Caco-2 (cell line): ENCODE measurements at regions of chr14 and their contacts with region 1.

Region 1: GRCh38 chr14:52729925-52730667 is at the start of gene STYX:
- DNase-seq: peak; percentile 99
- H3K4me3 ChIP-seq: peak within 1 kb of the TSS; percentile 68
- H3K4me3 Mint-ChIP-seq: peak within 1 kb of the TSS; percentile 94
- H3K27ac Mint-ChIP-seq: peak within 1 kb of the TSS; percentile 96
- H3K4me1 ChIP-seq: no peaks in the 10 kb centered on the region
- H3K4me1 Mint-ChIP-seq: peaks cover 6% of the 10 kb centered on the region
- H3K27me3 ChIP-seq: no peaks in the 10 kb centered on the region
- H3K27me3 Mint-ChIP-seq: no peaks in the 10 kb centered on the region
- CTCF ChIP-seq: no peak
- total RNA-seq, gene STYX: 23.1 and 24.4 TPM in 2 replicates

Region 2: DNA sequence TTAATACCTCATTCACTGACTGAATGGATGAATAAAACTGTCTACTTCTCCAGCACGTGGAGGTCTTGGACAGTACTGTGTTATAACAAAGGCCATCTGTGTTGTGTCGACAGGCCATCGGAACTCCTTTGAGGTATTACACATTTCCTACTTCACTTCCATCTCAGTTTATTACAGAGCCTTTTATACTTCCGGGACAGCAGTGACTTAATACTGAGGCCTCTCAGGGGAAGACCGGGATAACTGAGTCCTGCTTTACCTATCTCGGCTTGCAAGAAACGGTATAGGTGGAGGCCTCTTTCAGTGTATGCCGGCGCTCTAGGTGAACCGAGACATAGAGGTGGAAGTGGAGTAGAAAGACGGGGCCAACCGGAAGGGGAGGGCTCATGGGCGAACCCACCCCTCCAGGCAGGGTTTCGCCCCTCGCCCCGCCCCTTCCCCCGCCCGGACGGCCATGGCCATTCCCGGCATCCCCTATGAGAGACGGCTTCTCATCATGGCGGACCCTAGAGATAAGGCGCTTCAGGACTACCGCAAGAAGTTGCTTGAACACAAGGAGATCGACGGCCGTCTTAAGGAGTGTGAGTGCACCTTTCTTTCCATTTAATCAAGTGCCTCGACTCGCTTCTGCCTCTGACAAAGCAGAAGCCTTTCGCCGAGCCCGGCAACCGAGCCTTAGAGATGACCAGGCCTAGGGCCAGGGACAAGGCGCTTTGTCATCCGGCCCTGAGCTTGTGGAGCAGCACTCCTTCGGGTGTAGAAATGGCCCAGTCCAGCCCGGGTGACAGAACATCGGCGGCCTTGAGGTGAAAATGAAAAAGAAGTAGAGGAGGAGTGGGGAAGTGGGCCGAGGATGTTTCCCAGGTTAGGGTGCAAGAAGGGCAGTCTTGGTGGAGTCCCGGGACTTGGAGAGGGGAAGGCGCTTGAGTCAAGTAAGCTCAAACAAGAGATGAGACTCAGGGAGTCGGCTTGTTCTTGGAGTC is 23.1 kb before region 1 on chr14 and contains the start of gene PSMC6:
- CTCF ChIA-PET with region 1: no interaction called
- POLR2A ChIA-PET with region 1: interaction called, 6 read pairs
- intact Hi-C with region 1: loop called (anchors 1 kb)
- DNase-seq: peak; percentile 94 to 95
- H3K4me3 ChIP-seq: peak within 1 kb of the TSS; percentile 62
- H3K4me3 Mint-ChIP-seq: peak within 1 kb of the TSS; percentile 90
- H3K27ac Mint-ChIP-seq: peak within 1 kb of the TSS; percentile 90
- H3K4me1 ChIP-seq: no peaks in the 10 kb centered on the region
- H3K4me1 Mint-ChIP-seq: peaks cover 7% of the 10 kb centered on the region
- H3K27me3 ChIP-seq: no peaks in the 10 kb centered on the region
- H3K27me3 Mint-ChIP-seq: no peaks in the 10 kb centered on the region
- CTCF ChIP-seq: no peak
- total RNA-seq, gene PSMC6: 129 and 130 TPM in 2 replicates

Region 3: GRCh38 chr14:52791203-52792096 is 61.4 kb after region 1 on chr14 and contains the start of gene GNPNAT1:
- CTCF ChIA-PET with region 1: no interaction called
- POLR2A ChIA-PET with region 1: interaction called, 3 read pairs
- intact Hi-C with region 1: loop called (anchors 2 kb)
- DNase-seq: peak; percentile 87
- H3K4me3 ChIP-seq: peak within 1 kb of the TSS; percentile 73
- H3K4me3 Mint-ChIP-seq: peak within 1 kb of the TSS; percentile 98
- H3K27ac Mint-ChIP-seq: peak within 1 kb of the TSS; percentile 87
- H3K4me1 ChIP-seq: peaks cover 20% of the 10 kb centered on the region
- H3K4me1 Mint-ChIP-seq: peaks cover 6% of the 10 kb centered on the region
- H3K27me3 ChIP-seq: no peaks in the 10 kb centered on the region
- H3K27me3 Mint-ChIP-seq: no peaks in the 10 kb centered on the region
- CTCF ChIP-seq: no peak
- total RNA-seq, gene GNPNAT1: 35.9 and 41.6 TPM in 2 replicates